ENCODE measurements at regions of chr9 and their contacts with region 1.

Region 1: DNA sequence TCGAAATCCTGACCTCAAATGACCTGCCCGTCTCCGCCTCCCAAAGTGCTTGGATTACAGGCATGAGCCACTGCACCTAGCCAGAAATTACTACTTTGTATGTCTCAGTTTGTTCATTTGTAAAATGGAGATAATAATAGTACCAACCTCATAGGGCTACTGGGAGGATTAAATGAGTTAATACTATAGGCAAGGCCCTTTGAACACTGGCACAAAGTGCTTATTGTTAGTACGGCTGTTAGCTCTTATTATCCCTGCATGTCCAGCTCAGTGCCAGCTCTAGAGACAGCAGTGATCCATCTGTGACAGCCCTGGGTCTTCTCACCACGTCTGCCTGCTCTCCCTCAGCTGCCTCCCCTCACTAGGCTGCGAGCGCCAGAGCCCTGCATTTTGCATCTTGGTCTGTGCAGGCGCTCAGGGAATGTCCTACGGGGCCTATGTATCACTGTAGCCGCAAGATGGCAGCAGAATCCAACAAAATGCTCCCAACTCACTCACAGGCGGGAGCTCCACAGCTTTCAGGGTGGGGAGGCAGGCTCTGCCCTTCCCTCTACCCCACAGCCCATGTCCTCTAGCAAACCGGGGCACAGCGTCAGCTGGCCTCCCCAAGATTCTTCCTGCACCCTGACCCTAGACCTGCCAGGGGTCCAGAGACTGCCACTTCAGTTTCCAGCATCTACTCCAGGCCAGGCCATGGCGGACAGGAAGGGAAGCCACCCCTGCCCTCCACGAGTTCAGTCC is 17.7 kb upstream of the AKNA start:
- DNase-seq: peak; percentile 65 to 91 (median 81)
- ATAC-seq: peak; percentile 99
- H3K4me3 ChIP-seq: no peak overlapping the region
- H3K4me3 Mint-ChIP-seq: no peak overlapping the region
- H3K27ac ChIP-seq: no peak overlapping the region
- H3K27ac Mint-ChIP-seq: peak overlapping the region; percentile 14
- H3K4me1 ChIP-seq: peaks cover 11% of the 10 kb centered on the region
- H3K4me1 Mint-ChIP-seq: peaks cover 7% of the 10 kb centered on the region
- H3K27me3 ChIP-seq: no peaks in the 10 kb centered on the region
- H3K27me3 Mint-ChIP-seq: no peaks in the 10 kb centered on the region
- CTCF ChIP-seq: peak; percentile 64

Region 2: DNA sequence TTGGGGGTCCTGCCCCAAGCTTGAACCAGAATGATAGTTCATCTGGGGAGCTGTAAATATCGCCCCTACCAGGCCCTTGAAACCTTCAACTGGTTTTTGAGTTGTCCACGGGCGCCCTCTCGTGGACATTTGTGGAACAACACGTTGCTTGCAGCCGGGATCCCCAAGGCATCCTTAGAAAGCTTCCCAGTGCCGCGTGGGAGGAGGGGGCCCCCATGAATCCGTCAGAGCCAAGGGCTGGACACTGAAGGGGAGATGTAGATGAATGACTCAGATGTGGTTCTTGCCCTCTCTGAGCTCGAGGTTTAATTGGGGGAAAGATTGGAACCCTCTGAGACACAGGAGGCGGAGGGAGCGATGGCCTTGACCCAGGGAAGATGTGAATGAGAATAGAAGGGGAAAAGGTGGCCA is 114.4 kb before region 1 on chr9:
- CTCF ChIA-PET with region 1: no interaction called
- POLR2A ChIA-PET with region 1: no interaction called
- intact Hi-C with region 1: no loop called
- DNase-seq: peak; percentile 46 to 83 (median 69)
- ATAC-seq: peak; percentile 48
- H3K4me3 ChIP-seq: no peak overlapping the region
- H3K4me3 Mint-ChIP-seq: no peak overlapping the region
- H3K27ac ChIP-seq: no peak overlapping the region
- H3K27ac Mint-ChIP-seq: no peak overlapping the region
- H3K4me1 ChIP-seq: no peaks in the 10 kb centered on the region
- H3K4me1 Mint-ChIP-seq: no peaks in the 10 kb centered on the region
- H3K27me3 ChIP-seq: peaks cover 0 to 3% of the 10 kb centered on the region in 2 experiments
- H3K27me3 Mint-ChIP-seq: peaks cover 5% of the 10 kb centered on the region
- CTCF ChIP-seq: peak; percentile 92

Region 3: GRCh38 chr9:114385412-114386181 is 19.9 kb before region 1 on chr9:
- CTCF ChIA-PET with region 1: interaction called, 12 read pairs
- POLR2A ChIA-PET with region 1: interaction called, 10 read pairs
- intact Hi-C with region 1: no loop called
- DNase-seq: peak; percentile 76 to 98 (median 89)
- ATAC-seq: peak; percentile 70
- H3K4me3 ChIP-seq: peak overlapping the region; percentile 89 to 95
- H3K4me3 Mint-ChIP-seq: peak overlapping the region; percentile 99
- H3K27ac ChIP-seq: peak overlapping the region; percentile 90 to 93
- H3K27ac Mint-ChIP-seq: peak overlapping the region; percentile 95
- H3K4me1 ChIP-seq: peaks cover 72% of the 10 kb centered on the region
- H3K4me1 Mint-ChIP-seq: peaks cover 75% of the 10 kb centered on the region
- H3K27me3 ChIP-seq: no peaks in the 10 kb centered on the region
- H3K27me3 Mint-ChIP-seq: no peaks in the 10 kb centered on the region
- CTCF ChIP-seq: no peak

Region 4: DNA sequence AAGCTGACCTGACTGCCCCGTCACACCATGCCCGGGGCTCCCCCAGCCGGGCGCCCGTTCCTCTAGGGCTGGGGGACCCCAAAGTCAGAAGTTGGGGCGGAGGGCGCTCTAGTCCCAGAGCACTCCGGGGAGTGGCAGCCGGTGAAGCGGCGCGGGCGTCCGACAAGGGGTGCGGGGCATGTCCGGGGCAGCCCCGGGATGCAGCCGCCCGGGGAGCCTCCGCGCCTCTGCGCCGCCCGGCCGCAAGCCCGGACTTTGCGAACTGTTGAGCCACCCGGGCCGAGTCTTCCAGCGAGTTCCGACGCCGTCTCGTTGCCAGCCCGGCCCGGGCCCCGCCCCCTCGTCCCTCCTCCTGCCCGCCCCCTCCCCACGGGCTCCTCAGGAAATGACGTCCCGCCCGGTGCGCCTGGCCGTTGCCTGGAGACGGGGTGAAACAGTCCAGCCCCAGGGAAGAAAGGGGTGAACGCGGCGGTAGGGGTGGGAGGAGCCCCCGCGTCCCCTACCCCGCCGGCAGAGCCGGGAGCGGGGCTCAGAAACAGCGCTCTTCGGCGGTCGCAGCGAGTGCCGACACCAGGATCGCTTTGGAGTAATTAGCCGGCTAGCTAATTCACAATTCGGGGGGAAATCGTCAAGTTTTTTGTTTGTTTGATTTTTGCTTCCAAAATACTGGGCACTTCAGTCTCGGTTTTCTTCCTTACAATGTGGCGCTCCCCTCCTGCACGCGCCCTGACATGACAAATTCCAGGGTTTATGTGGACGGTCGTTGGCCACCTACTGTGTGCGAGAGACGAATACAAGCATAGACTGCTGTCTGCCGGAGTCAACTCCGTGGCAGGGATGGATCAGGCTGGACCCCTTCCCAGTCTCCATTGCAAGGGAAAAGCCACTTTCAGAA is 100.0 kb after region 1 on chr9 and contains the start of gene WHRN:
- CTCF ChIA-PET with region 1: interaction called, 77 read pairs
- POLR2A ChIA-PET with region 1: no interaction called
- intact Hi-C with region 1: loop called (anchors 1 to 2 kb)
- DNase-seq: peak; percentile 84 to 96 (median 91)
- ATAC-seq: peak; percentile 82
- H3K4me3 ChIP-seq: peak within 1 kb of the TSS; percentile 51 to 64
- H3K4me3 Mint-ChIP-seq: peak within 1 kb of the TSS; percentile 86
- H3K27ac ChIP-seq: peak within 1 kb of the TSS; percentile 33 to 45
- H3K27ac Mint-ChIP-seq: peak within 1 kb of the TSS; percentile 77
- H3K4me1 ChIP-seq: peaks cover 13% of the 10 kb centered on the region
- H3K4me1 Mint-ChIP-seq: peaks cover 34% of the 10 kb centered on the region
- H3K27me3 ChIP-seq: peaks cover 0 to 14% of the 10 kb centered on the region in 2 experiments
- H3K27me3 Mint-ChIP-seq: peaks cover 30% of the 10 kb centered on the region
- CTCF ChIP-seq: no peak
- total RNA-seq, gene WHRN: 41.9 to 45.5 TPM

Region 5: DNA sequence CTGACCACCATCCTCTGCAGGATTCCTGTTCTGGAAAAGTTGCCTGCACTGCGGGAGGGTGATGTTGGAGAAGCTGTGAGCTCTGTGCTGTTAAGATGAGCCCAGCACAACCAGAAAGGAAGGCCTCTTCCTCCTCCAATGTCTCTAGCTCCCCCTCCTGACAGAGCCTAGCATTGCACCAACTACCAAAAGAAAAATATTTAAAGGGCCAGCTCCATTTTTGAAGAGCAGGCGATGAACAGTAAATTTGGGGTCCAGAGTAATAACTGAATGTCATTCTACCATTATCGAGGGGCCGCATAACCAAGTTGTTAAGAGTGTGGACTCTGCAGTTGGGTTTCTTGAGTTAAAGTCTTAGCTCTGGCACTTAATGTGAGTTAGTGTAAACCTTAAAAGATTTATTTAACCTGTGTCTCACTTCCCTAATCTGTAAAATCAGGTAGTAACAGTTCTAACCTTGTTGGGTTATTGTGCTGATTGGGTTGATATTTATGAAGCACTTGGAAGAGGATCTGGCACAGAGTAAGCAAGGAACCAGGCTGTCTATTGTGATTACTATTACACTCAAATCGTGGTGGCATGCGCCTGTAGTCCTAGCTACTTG is 248.2 kb after region 1 on chr9:
- CTCF ChIA-PET with region 1: interaction called, 312 read pairs
- POLR2A ChIA-PET with region 1: interaction called, 19 read pairs
- intact Hi-C with region 1: loop called (anchors 1 kb)
- DNase-seq: peak; percentile 74 to 88 (median 81)
- ATAC-seq: peak; percentile 100
- H3K4me3 ChIP-seq: no peak overlapping the region
- H3K4me3 Mint-ChIP-seq: no peak overlapping the region
- H3K27ac ChIP-seq: no peak overlapping the region
- H3K27ac Mint-ChIP-seq: no peak overlapping the region
- H3K4me1 ChIP-seq: peaks cover 17% of the 10 kb centered on the region
- H3K4me1 Mint-ChIP-seq: peaks cover 19% of the 10 kb centered on the region
- H3K27me3 ChIP-seq: no peaks in the 10 kb centered on the region
- H3K27me3 Mint-ChIP-seq: no peaks in the 10 kb centered on the region
- CTCF ChIP-seq: peak; percentile 89

Region 6: GRCh38 chr9:114906908-114907571 is 501.6 kb after region 1 on chr9:
- CTCF ChIA-PET with region 1: interaction called, 11 read pairs
- POLR2A ChIA-PET with region 1: no interaction called
- intact Hi-C with region 1: loop called in 1 of 2 experiments (anchors 5 kb)
- DNase-seq: peak in 3 of 9 experiments; percentile 26 to 69 (median 60)
- ATAC-seq: peak; percentile 37
- H3K4me3 ChIP-seq: no peak overlapping the region
- H3K4me3 Mint-ChIP-seq: peak overlapping the region; percentile 23
- H3K27ac ChIP-seq: peak overlapping the region in 1 of 2 experiments; percentile 53
- H3K27ac Mint-ChIP-seq: peak overlapping the region; percentile 95
- H3K4me1 ChIP-seq: peaks cover 69% of the 10 kb centered on the region
- H3K4me1 Mint-ChIP-seq: peaks cover 92% of the 10 kb centered on the region
- H3K27me3 ChIP-seq: no peaks in the 10 kb centered on the region
- H3K27me3 Mint-ChIP-seq: no peaks in the 10 kb centered on the region
- CTCF ChIP-seq: peak; percentile 70